ENCODE measurements at regions of chr21 and their contacts with region 1.

Region 1: DNA sequence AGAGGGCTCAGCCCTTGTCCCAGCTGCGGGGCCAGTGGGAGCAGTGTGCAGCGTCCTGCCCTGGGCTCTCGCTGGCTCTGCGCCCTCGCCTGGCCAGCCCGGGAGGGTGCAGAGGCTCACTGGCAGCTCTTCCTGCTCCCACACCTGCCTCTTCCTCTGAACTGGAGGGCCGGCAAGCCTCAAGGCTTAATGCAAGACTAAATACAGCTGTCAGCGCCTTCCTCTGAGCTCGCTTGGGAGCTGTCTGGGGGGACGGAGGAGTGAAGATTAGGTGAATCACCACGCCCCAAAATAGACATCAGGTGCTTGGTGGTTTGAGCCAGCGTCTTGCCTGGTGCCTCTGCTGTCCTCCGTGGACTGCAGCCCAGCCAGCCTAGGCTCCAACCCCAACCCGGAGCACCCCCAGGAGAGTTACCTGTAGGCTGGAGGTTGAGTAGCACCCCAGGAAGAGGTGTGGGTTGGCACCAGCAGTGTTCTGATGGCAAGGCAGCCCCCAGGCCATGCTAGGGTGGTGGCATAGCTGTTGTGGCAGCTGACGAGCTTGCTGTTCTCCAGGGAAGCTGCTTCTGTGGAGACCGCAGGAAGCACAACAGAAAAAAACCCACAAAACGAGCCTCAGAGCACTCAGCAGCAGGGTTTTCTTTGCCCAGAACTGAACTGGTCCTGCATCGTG is 36.9 kb downstream of the UMODL1 start:
- DNase-seq: peak; percentile 58
- H3K4me3 ChIP-seq: no peak overlapping the region
- H3K27ac ChIP-seq: no peak overlapping the region
- H3K4me1 ChIP-seq: no peaks in the 10 kb centered on the region
- H3K27me3 ChIP-seq: peaks cover 5% of the 10 kb centered on the region in 2 experiments
- CTCF ChIP-seq: peak; percentile 77 to 98
- POLR2A ChIP-seq: no peak

Region 2: DNA sequence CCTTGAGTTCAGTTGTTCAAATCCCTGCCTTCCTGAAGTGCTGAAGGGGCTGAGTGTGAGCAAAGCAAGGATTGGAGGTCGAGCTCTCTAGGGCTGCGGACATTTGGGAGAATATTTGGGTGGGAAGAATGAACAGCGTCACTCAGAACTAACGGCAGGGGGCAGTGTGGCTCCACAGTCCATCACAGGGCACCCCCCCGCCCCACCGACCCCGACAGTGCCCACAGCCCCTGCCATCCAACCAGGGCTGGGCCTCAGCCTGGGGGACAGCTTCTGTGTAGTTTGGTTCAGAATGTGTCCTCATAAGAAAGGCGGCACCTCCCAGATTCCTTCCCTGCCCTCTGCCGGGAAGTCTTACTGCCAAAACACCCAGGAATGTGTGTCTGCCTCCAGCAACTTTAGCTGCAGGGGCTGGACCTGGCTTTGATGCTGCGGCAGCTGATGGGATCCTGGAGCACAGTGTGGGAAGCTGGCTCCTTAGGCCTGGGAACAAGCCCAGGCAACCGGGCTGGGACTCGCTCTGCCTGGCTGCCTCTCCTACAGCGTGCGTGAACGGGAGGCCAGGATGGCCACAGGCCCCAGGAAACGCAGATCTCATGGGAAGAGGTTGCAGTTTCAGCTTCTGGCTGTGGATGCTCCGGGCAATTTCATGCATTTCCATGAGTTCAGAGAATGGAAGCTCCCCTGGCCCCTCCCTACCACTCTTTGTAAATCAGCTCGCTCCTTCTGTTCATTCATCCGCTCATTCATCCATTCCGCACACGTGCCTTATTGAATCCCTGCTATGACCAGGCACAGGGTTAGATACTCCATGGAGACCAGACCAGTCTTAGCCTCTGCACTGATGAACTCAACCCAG is 495.1 kb before region 1 on chr21:
- CTCF ChIA-PET with region 1: interaction called, 10 read pairs
- POLR2A ChIA-PET with region 1: no interaction called
- dilution Hi-C with region 1: no loop called
- intact Hi-C with region 1: no loop called
- DNase-seq: no peak
- H3K4me3 ChIP-seq: no peak overlapping the region
- H3K27ac ChIP-seq: no peak overlapping the region
- H3K4me1 ChIP-seq: no peaks in the 10 kb centered on the region
- H3K27me3 ChIP-seq: peaks cover 0 to 2% of the 10 kb centered on the region in 2 experiments
- CTCF ChIP-seq: peak; percentile 50 to 76
- POLR2A ChIP-seq: no peak

Region 3: GRCh38 chr21:41933313-41934086 is 174.5 kb before region 1 on chr21:
- CTCF ChIA-PET with region 1: interaction called, 93 read pairs
- POLR2A ChIA-PET with region 1: no interaction called
- dilution Hi-C with region 1: no loop called
- intact Hi-C with region 1: loop called (anchors 1 kb)
- DNase-seq: peak; percentile 78
- H3K4me3 ChIP-seq: peak overlapping the region in 2 of 3 experiments; percentile 15 to 49
- H3K27ac ChIP-seq: peak overlapping the region; percentile 80
- H3K4me1 ChIP-seq: peaks cover 26% of the 10 kb centered on the region
- H3K27me3 ChIP-seq: no peaks in the 10 kb centered on the region
- CTCF ChIP-seq: peak; percentile 38 to 44
- POLR2A ChIP-seq: no peak

Region 4: DNA sequence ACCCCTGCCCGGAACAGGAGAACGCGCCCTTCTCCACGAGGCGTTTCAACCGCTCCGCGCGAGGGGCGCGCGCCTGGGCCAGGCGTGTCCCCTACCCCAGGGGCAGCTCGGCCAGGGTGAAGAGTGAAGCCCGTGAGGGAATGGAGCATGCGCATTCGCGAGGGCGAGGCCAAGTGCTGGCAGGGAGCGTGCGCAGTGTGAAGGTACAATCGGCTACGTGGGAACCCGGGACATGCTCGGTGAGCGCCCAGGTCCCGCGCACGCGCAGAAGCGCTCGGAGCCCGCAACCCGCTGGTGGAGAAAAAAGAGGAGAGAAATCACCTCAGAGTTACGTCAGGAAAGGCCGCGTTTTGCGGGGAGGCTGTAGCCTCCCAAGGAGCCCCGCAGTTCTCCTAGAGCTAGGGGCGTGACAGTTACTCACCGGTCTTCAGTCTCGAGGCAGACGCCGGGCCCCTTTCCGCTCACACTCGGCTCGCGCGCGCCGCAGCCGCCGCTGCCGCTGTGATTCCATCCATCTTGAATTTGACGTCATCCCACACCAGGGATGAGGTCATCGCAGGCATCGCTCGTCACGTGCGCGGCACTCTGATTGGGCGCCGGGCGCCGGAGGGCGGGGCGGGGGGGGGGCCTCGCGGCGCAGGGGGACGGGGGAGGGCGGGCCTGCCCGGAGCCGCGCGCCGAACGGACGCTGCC is 98.0 kb before region 1 on chr21 and contains the start of gene ZBTB21:
- CTCF ChIA-PET with region 1: interaction called, 17 read pairs
- POLR2A ChIA-PET with region 1: no interaction called
- dilution Hi-C with region 1: no loop called
- intact Hi-C with region 1: loop called (anchors 2 kb)
- DNase-seq: peak; percentile 98
- H3K4me3 ChIP-seq: peak within 1 kb of the TSS; percentile 47 to 70 (median 55)
- H3K27ac ChIP-seq: peak within 1 kb of the TSS; percentile 70
- H3K4me1 ChIP-seq: peaks cover 15% of the 10 kb centered on the region
- H3K27me3 ChIP-seq: peaks cover 3 to 14% of the 10 kb centered on the region in 2 experiments
- CTCF ChIP-seq: no peak
- POLR2A ChIP-seq: peak; percentile 80
- total RNA-seq, gene ZBTB21: 10.8 and 12.4 TPM in 2 replicates

Region 5: GRCh38 chr21:42073145-42074092 is 34.6 kb before region 1 on chr21:
- CTCF ChIA-PET with region 1: interaction called, 12 read pairs
- POLR2A ChIA-PET with region 1: no interaction called
- dilution Hi-C with region 1: no loop called
- intact Hi-C with region 1: no loop called
- DNase-seq: no peak
- H3K4me3 ChIP-seq: no peak overlapping the region
- H3K27ac ChIP-seq: no peak overlapping the region
- H3K4me1 ChIP-seq: no peaks in the 10 kb centered on the region
- H3K27me3 ChIP-seq: peaks cover 16 to 17% of the 10 kb centered on the region in 2 experiments
- CTCF ChIP-seq: no peak
- POLR2A ChIP-seq: no peak

Region 6: GRCh38 chr21:42097860-42098454 is 10.1 kb before region 1 on chr21:
- CTCF ChIA-PET with region 1: interaction called, 54 read pairs
- POLR2A ChIA-PET with region 1: no interaction called
- dilution Hi-C with region 1: no loop called
- intact Hi-C with region 1: loop called (anchors 1 kb)
- DNase-seq: peak; percentile 97
- H3K4me3 ChIP-seq: no peak overlapping the region
- H3K27ac ChIP-seq: peak overlapping the region; percentile 85
- H3K4me1 ChIP-seq: peaks cover 13% of the 10 kb centered on the region
- H3K27me3 ChIP-seq: peaks cover under 1 to 7% of the 10 kb centered on the region in 2 experiments
- CTCF ChIP-seq: no peak
- POLR2A ChIP-seq: no peak

Region 7: DNA sequence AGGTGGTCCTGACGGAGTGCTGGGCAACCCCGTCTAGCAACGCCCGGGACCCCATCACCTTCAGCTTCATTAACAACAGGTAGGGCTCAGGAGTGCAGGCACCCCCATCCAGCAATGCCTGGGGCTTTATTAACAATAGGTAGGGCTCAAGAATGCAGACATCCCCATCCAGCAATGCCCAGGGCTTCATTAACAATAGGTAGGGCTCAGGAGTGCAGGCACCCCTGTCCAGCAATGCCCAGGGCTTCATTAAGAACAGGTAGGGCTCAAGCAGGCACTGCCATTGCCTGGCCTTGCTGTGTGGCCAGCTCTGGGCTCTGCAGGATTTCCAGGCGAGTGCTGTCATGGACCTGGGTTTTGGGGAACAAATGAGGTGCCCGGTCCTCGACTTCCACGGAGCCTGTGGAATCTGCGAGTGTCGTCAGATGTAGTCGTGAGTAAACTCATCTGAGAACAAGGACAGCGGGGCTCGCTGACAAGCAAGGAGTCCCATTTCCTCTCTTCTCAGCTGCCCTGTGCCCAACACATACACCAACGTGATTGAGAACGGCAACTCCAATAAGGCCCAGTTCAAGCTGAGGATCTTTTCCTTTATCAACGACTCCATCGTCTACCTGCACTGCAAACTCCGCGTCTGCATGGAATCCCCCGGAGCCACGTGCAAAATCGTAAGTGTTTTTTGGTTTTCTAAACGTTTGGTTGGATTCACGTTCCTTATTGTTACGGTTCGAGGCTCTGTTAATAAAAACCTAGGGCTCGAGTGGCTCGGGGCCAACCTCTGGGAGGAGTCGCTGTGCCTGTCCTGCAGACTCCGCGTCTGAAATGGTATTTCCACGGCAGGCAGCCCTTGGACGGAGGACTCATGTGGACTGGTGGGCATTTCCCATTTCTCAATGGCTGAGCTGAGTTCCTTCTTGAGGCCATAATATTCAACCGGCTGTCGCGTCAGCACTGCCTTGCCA is 19.4 kb after region 1 on chr21:
- CTCF ChIA-PET with region 1: no interaction called
- POLR2A ChIA-PET with region 1: no interaction called
- dilution Hi-C with region 1: no loop called
- intact Hi-C with region 1: no loop called
- DNase-seq: no peak
- H3K4me3 ChIP-seq: no peak overlapping the region
- H3K27ac ChIP-seq: no peak overlapping the region
- H3K4me1 ChIP-seq: no peaks in the 10 kb centered on the region
- H3K27me3 ChIP-seq: peaks cover 0 to 3% of the 10 kb centered on the region in 2 experiments
- CTCF ChIP-seq: no peak
- POLR2A ChIP-seq: no peak

Region 8: DNA sequence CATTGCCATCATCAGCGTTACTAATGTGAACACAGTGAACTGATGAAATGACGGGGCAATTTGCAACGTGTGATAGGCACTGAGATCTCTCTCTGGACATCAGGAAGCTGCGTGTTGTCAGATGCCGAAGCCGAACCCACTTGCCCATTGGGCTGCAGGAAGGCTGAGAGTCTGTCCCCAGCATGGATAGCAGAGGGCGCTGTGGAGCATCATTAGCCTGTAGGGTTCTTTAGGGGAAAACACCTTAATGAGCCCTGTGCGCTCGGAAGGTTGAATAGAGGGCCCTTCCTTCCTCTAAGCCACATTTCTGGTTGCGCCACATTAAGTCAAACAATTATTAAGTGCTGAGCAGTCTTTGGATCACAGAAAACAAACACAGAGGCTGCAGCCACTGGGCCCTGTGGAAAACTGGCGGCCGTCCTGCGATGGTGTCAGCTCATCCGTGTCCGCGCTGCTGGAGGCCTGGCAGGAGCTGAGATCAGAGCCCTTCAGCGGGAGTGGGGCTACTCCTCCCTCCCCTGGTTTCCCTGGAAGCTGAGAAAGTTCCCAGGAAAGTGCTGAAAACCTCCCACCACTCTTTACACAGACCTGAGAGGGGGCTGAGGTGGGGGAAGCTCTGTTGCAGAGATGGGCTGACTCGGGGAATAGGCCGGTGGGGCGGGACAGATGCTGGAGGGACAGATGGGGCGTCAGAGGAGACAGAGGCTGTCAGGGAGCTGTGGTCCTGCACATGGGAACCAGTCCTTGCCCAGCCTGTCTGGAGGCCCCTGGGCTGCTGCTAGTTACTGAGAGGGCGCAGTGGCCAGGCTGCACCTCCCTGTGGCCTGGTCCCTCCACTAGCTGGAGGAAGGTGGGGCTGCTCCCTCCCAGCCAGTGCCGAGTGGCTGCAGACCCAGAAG is 230.1 kb after region 1 on chr21:
- CTCF ChIA-PET with region 1: no interaction called
- POLR2A ChIA-PET with region 1: no interaction called
- dilution Hi-C with region 1: no loop called
- intact Hi-C with region 1: no loop called
- DNase-seq: peak; percentile 53
- H3K4me3 ChIP-seq: no peak overlapping the region
- H3K27ac ChIP-seq: no peak overlapping the region
- H3K4me1 ChIP-seq: no peaks in the 10 kb centered on the region
- H3K27me3 ChIP-seq: peaks cover 10 to 32% of the 10 kb centered on the region in 2 experiments
- CTCF ChIP-seq: peak; percentile 59 to 62
- POLR2A ChIP-seq: no peak